ENCODE measurements at regions of chr15 and their contacts with region 1.

Region 1: DNA sequence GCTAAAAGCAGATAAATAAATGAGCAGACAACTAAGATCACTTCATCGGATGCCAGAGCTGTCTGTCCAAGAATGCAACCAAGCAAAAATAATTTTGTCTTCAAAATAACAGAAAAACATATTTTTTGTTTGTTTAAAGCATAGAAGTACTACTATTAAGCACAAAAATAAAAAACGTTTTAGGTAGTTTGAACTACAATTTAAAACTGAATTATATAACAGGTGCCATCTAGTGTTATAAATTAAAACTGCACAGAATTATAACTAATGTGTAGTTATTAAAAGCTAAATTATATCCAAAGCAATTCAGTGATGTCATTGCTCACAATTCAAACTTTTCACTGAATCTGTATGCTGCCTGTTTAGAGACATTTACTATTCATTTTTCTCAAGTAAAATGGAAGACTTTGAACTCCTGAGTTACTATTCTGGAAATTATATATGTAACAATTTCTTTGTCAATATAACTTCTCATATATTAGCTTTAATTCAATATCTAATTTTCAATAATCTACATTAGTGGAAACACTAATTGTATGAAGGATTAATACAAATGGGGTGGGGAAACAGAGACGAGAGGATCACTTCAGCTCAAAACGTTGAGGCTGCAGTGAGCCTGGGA is 29.5 kb downstream of the LINS1 start:
- DNase-seq: no peak

Region 2: DNA sequence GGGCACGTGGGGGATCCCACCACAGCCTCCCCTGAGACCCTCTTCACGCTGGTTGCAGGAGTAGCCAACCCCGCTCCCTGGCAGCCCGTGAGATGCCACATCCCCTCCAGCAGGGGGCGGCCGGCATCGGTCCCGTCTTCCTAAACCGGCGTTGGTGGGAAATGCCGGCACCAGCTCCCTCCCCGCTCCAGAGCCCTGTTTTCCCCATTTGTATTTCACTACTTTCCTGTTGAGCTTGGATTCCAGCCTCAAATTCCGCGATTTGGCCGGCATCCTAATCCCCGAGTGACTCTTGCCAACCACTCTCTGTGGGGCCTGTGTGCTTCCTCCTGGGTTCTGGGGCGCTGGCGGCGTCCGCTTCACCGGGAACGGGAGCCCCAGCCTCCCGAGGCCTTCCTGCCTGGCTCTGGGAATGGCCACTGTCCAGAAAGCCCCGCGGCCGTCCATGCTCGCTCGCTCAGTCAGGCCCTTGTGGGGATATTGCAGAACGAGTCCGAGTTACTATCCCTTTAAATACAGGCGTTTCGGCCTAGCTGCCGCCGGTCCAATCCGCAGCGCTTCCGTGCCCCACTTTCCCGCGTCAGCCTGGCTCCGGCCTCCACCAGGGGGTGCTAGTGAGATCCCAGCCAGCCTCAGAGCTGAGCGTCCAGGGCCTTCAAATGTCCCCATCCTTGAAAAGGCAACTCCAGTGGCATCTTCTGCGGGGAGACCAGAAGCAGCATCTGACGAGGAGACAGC is 222.6 kb before region 1 on chr15:
- intact Hi-C with region 1: loop called (anchors 5 kb)
- DNase-seq: peak; percentile 86 to 97 (median 93)

Measured in head of caudate nucleus (tissue), 42 donors.